ENCODE measurements at regions of chr7 and their contacts with region 1.

Region 1: DNA sequence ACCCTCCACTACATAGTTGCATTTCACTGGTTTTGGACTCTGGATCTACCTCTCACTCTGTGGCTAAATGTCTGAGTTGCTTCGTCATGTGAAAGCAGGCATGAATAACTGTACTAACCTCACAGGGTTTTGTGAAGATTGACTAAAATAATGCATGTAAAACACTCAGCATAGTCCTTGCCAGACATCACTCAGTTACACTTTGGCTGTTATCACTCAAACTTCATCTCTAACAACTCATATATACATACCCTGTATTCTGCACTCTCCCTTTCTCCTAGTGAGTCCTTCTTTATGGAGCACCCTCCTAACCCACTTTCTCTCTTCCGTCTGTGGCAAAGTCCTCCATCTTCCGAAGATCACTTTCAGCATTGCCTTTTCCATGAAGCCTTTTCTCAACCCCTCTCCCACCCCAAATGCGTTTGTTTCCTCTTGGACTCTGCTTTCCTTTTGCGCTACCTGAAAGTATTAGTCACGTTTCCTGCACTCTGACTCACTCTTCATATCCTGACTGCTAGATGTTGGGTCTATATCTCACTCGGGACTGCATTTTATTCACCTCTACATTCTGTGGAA is 72.6 kb downstream of the OSBPL3 start:
- DNase-seq: peak; percentile 69
- ATAC-seq: peak; percentile 73
- H3K4me3 Mint-ChIP-seq: no peak overlapping the region
- H3K27ac Mint-ChIP-seq: no peak overlapping the region
- H3K4me1 Mint-ChIP-seq: peaks cover 42% of the 10 kb centered on the region
- H3K27me3 Mint-ChIP-seq: no peaks in the 10 kb centered on the region

Region 2: GRCh38 chr7:24926623-24927524 is 19.5 kb after region 1 on chr7:
- CTCF ChIA-PET with region 1: interaction called, 20 read pairs
- DNase-seq: no peak
- ATAC-seq: no peak
- H3K4me3 Mint-ChIP-seq: no peak overlapping the region
- H3K27ac Mint-ChIP-seq: peak overlapping the region; percentile 11
- H3K4me1 Mint-ChIP-seq: peaks cover 58% of the 10 kb centered on the region
- H3K27me3 Mint-ChIP-seq: no peaks in the 10 kb centered on the region